Mammary epithelial cell (primary cell): ENCODE measurements at regions of chr15 and their contacts with region 1.

Region 1: DNA sequence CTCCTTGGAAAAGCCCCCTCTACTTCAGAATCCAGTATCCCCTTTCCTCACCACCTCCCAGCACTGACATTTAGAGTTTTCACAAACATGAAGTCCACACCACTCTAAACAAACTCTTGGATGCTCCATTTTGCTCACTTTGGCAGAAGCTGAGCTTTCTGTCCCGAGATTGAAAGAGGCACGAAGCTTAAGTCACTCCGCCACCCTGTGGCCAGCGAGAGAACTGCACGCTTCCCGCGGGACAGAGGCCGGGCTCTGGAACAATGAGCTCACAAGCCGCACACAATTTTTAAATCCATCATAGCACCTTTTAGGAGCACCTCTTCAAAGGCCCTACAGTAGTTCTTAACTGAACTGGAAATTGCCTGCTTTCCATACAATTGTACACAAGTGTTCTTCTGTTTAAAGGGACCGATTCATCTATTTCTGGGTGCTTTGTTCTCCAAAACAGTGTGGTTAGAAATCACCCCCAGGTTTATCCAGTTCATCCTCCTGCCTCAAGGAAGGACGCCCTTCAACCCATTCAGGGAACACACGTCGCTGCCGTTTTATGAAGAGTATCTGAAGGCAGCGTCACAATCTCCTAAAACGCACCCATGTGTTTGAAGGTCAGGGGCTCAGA is 226.1 kb downstream of the VPS13C start:
- DNase-seq: peak; percentile 55
- H3K4me3 ChIP-seq: no peak overlapping the region
- H3K27ac ChIP-seq: no peak overlapping the region
- H3K4me1 ChIP-seq: no peaks in the 10 kb centered on the region
- H3K27me3 ChIP-seq: no peaks in the 10 kb centered on the region
- CTCF ChIP-seq: peak; percentile 96 to 99

Region 2: DNA sequence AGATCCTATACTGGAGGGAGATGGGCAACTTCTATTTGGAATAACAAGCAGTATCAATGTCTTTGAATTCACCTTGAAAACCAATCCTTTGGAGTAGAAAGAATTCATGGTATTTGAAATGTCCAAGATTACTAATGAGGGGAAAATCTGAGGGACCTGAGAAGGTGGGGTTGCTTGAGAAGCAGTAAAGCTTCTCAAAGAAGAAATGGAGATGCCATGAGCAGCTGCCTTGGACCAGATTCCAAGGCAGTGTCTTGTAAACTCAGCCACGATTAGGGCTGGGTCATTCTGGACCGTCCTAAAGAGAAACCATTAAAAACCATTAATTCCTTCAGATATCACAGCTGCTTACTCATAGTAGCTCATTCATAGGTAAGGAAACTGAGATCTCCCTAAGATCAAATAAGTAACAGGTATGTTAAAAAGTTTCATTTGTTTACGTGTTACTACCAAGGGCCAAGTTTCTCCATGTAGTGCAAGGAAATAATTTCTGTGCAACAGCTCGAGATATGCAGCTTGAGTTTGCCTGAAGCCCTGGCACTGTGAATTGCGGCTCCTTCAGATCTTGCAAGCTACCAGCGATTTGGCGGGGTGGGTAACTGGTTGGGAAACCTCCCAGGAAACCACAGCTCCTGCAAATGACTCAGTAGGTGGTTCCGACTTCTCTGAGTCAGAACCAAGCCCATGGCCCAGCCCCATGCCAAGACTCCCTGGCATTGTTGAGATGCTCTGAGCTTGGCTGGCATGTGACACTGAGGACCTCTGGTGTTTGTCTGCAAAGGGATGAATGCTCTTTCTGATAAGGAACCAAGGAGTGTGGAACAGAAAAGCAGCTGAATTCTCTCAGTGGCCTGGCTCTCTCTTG is 901.9 kb before region 1 on chr15:
- CTCF ChIA-PET with region 1: no interaction called
- dilution Hi-C with region 1: no loop called
- in situ Hi-C with region 1: loop called in 1 of 2 experiments (anchors 25 kb)
- intact Hi-C with region 1: no loop called
- DNase-seq: peak; percentile 93
- H3K4me3 ChIP-seq: peak overlapping the region in 1 of 3 experiments; percentile 23
- H3K27ac ChIP-seq: no peak overlapping the region
- H3K4me1 ChIP-seq: peaks cover 26% of the 10 kb centered on the region
- H3K27me3 ChIP-seq: peaks cover 3% of the 10 kb centered on the region
- CTCF ChIP-seq: peak; percentile 68 to 79

Region 3: GRCh38 chr15:61169904-61170695 is 664.1 kb before region 1 on chr15:
- CTCF ChIA-PET with region 1: interaction called, 10 read pairs
- dilution Hi-C with region 1: no loop called
- in situ Hi-C with region 1: loop called (anchors 10 to 25 kb)
- intact Hi-C with region 1: loop called (anchors 1 kb)
- DNase-seq: no peak
- H3K4me3 ChIP-seq: no peak overlapping the region
- H3K27ac ChIP-seq: no peak overlapping the region
- H3K4me1 ChIP-seq: no peaks in the 10 kb centered on the region
- H3K27me3 ChIP-seq: no peaks in the 10 kb centered on the region
- CTCF ChIP-seq: no peak

Region 4: GRCh38 chr15:61383421-61383820 is 450.8 kb before region 1 on chr15:
- CTCF ChIA-PET with region 1: no interaction called
- dilution Hi-C with region 1: loop called (anchors 5 kb)
- in situ Hi-C with region 1: no loop called
- intact Hi-C with region 1: no loop called
- DNase-seq: peak; percentile 42
- H3K4me3 ChIP-seq: no peak overlapping the region
- H3K27ac ChIP-seq: no peak overlapping the region
- H3K4me1 ChIP-seq: no peaks in the 10 kb centered on the region
- H3K27me3 ChIP-seq: no peaks in the 10 kb centered on the region
- CTCF ChIP-seq: no peak

Region 5: DNA sequence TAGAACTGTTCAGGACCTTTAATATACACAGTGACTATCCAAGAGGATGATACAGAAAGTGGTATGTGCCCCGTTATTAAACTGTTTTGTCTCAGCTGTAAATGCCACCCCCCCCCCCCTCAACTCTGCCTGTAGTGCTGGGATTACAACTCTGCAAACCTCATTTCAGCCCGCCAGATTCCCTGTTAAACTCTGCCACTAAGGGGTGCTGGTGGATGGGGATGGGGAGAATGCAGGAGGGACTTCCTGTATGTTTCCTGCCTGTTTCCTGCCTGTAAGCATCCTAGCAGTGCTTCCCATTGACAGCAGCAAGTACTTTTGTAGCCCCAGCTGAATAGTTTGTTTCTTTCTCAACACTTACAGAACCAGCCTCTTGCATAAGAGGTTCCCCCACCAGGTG is 303.4 kb before region 1 on chr15:
- CTCF ChIA-PET with region 1: interaction called, 27 read pairs
- dilution Hi-C with region 1: no loop called
- in situ Hi-C with region 1: no loop called
- intact Hi-C with region 1: loop called (anchors 2 kb)
- DNase-seq: peak; percentile 3
- H3K4me3 ChIP-seq: no peak overlapping the region
- H3K27ac ChIP-seq: no peak overlapping the region
- H3K4me1 ChIP-seq: no peaks in the 10 kb centered on the region
- H3K27me3 ChIP-seq: no peaks in the 10 kb centered on the region
- CTCF ChIP-seq: peak; percentile 8 to 22

Region 6: GRCh38 chr15:61541516-61541915 is 292.7 kb before region 1 on chr15:
- CTCF ChIA-PET with region 1: no interaction called
- dilution Hi-C with region 1: no loop called
- in situ Hi-C with region 1: no loop called
- intact Hi-C with region 1: no loop called
- DNase-seq: no peak
- H3K4me3 ChIP-seq: no peak overlapping the region
- H3K27ac ChIP-seq: no peak overlapping the region
- H3K4me1 ChIP-seq: no peaks in the 10 kb centered on the region
- H3K27me3 ChIP-seq: peaks cover 2% of the 10 kb centered on the region
- CTCF ChIP-seq: no peak

Region 7: DNA sequence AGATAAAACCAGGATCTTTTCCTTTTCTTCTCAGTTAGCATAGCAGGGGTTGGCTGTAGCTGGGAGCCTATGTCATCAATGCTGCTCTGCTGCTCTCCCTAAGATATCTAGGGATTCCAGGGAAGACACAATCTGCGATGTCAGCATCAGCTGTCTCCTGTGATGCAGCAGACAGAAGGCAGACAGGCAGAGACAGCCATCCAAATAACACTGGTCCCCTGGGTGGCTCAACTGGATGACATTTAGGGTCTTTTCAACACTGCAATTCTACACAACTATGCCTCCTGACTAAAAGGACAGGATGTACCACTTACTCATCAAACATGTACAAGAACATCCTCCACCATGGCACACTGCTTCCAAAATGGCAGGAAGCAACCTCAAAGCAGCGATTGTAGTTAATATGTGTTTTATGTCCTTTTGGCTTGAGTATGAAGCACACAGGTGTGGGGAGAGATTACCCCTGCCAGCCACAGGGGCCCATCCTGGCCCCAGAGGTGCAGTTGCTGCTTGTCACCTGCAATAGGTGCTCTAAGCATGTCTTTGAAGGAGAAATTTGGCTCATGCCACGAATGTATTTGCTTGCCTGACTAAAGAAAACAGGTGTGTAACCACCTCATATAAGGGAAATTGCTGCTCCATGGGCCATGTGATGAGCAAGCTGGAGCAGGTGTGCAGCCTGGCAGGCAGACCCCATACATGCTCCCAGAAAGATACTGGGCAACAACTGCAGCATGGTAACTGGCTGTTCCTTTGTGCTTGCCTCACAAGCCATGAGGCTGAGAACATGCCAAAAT is 131.8 kb before region 1 on chr15:
- CTCF ChIA-PET with region 1: interaction called, 10 read pairs
- dilution Hi-C with region 1: no loop called
- in situ Hi-C with region 1: no loop called
- intact Hi-C with region 1: loop called (anchors 1 kb)
- DNase-seq: no peak
- H3K4me3 ChIP-seq: no peak overlapping the region
- H3K27ac ChIP-seq: no peak overlapping the region
- H3K4me1 ChIP-seq: peaks cover 2% of the 10 kb centered on the region
- H3K27me3 ChIP-seq: no peaks in the 10 kb centered on the region
- CTCF ChIP-seq: peak; percentile 42 to 65

Region 8: GRCh38 chr15:61861962-61862361 is 27.8 kb after region 1 on chr15:
- CTCF ChIA-PET with region 1: no interaction called
- dilution Hi-C with region 1: no loop called
- in situ Hi-C with region 1: no loop called
- intact Hi-C with region 1: no loop called
- DNase-seq: no peak
- H3K4me3 ChIP-seq: no peak overlapping the region
- H3K27ac ChIP-seq: no peak overlapping the region
- H3K4me1 ChIP-seq: no peaks in the 10 kb centered on the region
- H3K27me3 ChIP-seq: no peaks in the 10 kb centered on the region
- CTCF ChIP-seq: no peak

Region 9: DNA sequence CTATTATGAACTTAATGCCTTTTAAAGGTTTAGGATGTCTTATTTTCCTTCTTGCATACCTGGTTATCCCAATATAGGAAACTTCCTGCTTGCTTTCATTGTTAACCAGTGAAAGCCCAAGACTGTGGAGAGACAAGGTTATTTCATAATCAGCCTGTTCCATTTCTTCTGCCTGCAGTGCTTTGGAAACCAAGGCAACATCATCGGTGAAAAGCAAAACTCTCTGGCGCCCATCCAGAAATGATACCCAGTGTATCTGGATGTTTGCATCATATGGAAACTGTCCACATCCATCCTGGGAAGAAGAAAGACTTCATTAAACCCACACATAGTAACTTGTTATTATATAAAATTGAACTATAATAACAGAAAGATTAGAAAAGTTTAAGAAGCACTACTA is 55.9 kb after region 1 on chr15:
- CTCF ChIA-PET with region 1: no interaction called
- dilution Hi-C with region 1: no loop called
- in situ Hi-C with region 1: no loop called
- intact Hi-C with region 1: no loop called
- DNase-seq: peak; percentile 60
- H3K4me3 ChIP-seq: no peak overlapping the region
- H3K27ac ChIP-seq: no peak overlapping the region
- H3K4me1 ChIP-seq: peaks cover 7% of the 10 kb centered on the region
- H3K27me3 ChIP-seq: no peaks in the 10 kb centered on the region
- CTCF ChIP-seq: no peak